Naive thymus-derived CD4-positive, alpha-beta T cell (primary cell): ENCODE measurements at regions of chr1 and their contacts with region 1.

Region 1: GRCh38 chr1:16366722-16367257 is at the start of gene SZRD1:
- DNase-seq: peak; percentile 81 to 98 (median 96)
- ATAC-seq: peak; percentile 94
- H3K4me3 ChIP-seq: peak within 1 kb of the TSS; percentile 98
- H3K4me3 Mint-ChIP-seq: peak within 1 kb of the TSS; percentile 93 to 99 (median 96)
- H3K27ac ChIP-seq: peak within 1 kb of the TSS; percentile 99
- H3K27ac Mint-ChIP-seq: peak within 1 kb of the TSS; percentile 90 to 99 (median 97)
- H3K4me1 ChIP-seq: peaks cover 19 to 26% of the 10 kb centered on the region in 2 donors
- H3K4me1 Mint-ChIP-seq: peaks cover 15 to 43% (median 38%) of the 10 kb centered on the region in 7 donors
- H3K27me3 ChIP-seq: no peaks in the 10 kb centered on the region
- H3K27me3 Mint-ChIP-seq: no peaks in the 10 kb centered on the region
- total RNA-seq, gene SZRD1: 81.6 to 163 (median 125) TPM

Region 2: DNA sequence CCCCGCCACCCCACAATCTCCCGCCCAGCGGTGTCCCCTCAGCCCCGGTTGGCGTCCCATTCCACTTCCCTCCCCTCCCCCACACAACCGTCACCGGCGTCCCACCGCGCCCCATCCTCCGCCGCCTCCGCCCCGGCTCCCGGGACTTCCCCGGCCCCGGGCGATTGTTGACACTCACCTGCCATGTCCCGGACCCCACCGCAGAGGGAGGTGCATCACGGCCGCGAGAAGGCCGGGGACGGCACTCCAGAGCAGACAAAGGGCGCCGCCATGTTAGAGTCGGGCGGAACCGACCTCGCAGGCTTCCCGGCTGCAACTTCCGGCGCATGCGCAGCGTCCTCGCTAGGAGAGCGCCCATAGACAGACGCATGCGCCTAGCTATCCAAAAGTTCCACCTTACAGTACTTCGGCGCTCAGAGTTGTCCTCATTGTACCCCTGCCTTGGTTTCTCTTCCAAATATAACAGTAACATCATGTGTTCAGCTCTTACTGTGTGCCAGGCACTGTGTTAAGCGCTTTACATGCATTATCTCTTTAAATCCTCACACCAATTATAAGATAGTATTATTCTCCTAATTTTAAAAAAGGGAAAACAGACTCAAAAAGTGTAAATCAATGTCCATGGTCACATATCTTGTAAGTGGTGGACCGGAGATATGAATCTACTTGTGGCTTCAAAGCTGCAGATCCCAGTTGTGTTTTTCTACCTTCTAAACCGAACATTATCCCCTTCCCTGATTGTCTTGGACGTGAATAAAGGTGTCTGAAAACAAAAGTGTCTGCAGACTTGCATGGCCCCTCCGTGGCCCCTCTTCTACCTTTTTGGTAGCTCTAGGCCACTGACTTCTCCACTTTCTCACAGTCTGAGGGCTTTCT is 390.7 kb before region 1 on chr1 and contains the start of gene ZBTB17:
- CTCF ChIA-PET with region 1: no interaction called
- POLR2A ChIA-PET with region 1: interaction called, 3 read pairs
- intact Hi-C with region 1: loop called in 1 of 2 experiments (anchors 1 kb)
- DNase-seq: peak; percentile 90 to 95 (median 94)
- ATAC-seq: peak; percentile 96
- H3K4me3 ChIP-seq: peak within 1 kb of the TSS; percentile 76
- H3K4me3 Mint-ChIP-seq: peak within 1 kb of the TSS; percentile 82 to 94 (median 90)
- H3K27ac ChIP-seq: peak within 1 kb of the TSS; percentile 83
- H3K27ac Mint-ChIP-seq: peak within 1 kb of the TSS; percentile 82 to 95 (median 92)
- H3K4me1 ChIP-seq: peaks cover 12 to 17% of the 10 kb centered on the region in 2 donors
- H3K4me1 Mint-ChIP-seq: peaks cover 21 to 46% (median 38%) of the 10 kb centered on the region in 7 donors
- H3K27me3 ChIP-seq: no peaks in the 10 kb centered on the region
- H3K27me3 Mint-ChIP-seq: no peaks in the 10 kb centered on the region
- total RNA-seq, gene ZBTB17: 47.3 to 85.1 (median 65.0) TPM

Region 3: GRCh38 chr1:16206547-16207317 is 160.1 kb before region 1 on chr1:
- CTCF ChIA-PET with region 1: no interaction called
- POLR2A ChIA-PET with region 1: interaction called, 3 read pairs
- intact Hi-C with region 1: loop called (anchors 1 kb)
- DNase-seq: peak; percentile 85 to 95 (median 93)
- ATAC-seq: peak; percentile 94
- H3K4me3 ChIP-seq: peak overlapping the region; percentile 74
- H3K4me3 Mint-ChIP-seq: peak overlapping the region; percentile 83 to 95 (median 90)
- H3K27ac ChIP-seq: peak overlapping the region; percentile 81
- H3K27ac Mint-ChIP-seq: peak overlapping the region; percentile 87 to 98 (median 95)
- H3K4me1 ChIP-seq: peaks cover 9 to 15% of the 10 kb centered on the region in 2 donors
- H3K4me1 Mint-ChIP-seq: peaks cover 7 to 17% (median 13%) of the 10 kb centered on the region in 7 donors
- H3K27me3 ChIP-seq: no peaks in the 10 kb centered on the region
- H3K27me3 Mint-ChIP-seq: no peaks in the 10 kb centered on the region

Region 4: DNA sequence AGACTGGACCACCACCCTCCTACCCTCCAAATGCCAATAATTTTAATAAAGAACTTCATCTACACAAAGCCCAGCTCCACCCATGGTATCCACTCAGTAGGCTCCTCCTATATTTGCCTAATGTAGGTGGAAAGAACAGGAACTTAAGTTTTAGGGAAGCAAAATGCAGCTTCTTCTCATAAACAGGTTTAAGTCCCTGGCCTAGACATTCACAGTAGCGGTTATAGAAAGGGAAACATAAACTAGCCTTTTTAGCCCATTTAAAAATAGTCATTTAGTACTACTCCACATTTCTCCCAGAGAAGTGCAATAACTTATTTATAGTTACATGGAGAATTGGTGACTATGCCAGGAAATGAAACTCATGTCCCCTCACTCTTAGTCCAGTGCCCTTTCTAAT is 73.3 kb before region 1 on chr1:
- CTCF ChIA-PET with region 1: interaction called, 3 read pairs
- POLR2A ChIA-PET with region 1: interaction called, 5 read pairs
- intact Hi-C with region 1: loop called in 1 of 2 experiments (anchors 5 kb)
- DNase-seq: no peak
- ATAC-seq: peak; percentile 69
- H3K4me3 ChIP-seq: no peak overlapping the region
- H3K4me3 Mint-ChIP-seq: no peak overlapping the region
- H3K27ac ChIP-seq: no peak overlapping the region
- H3K27ac Mint-ChIP-seq: no peak overlapping the region
- H3K4me1 ChIP-seq: no peaks in the 10 kb centered on the region
- H3K4me1 Mint-ChIP-seq: peaks cover 2 to 24% (median 7%) of the 10 kb centered on the region in 7 donors
- H3K27me3 ChIP-seq: no peaks in the 10 kb centered on the region
- H3K27me3 Mint-ChIP-seq: no peaks in the 10 kb centered on the region

Region 5: GRCh38 chr1:16324456-16324890 is 42.3 kb before region 1 on chr1:
- CTCF ChIA-PET with region 1: no interaction called
- POLR2A ChIA-PET with region 1: no interaction called
- intact Hi-C with region 1: no loop called
- DNase-seq: no peak
- ATAC-seq: no peak
- H3K4me3 ChIP-seq: no peak overlapping the region
- H3K4me3 Mint-ChIP-seq: peak overlapping the region in 1 of 10 donors; percentile 17
- H3K27ac ChIP-seq: no peak overlapping the region
- H3K27ac Mint-ChIP-seq: peak overlapping the region in 2 of 9 donors; percentile 28 to 68
- H3K4me1 ChIP-seq: no peaks in the 10 kb centered on the region
- H3K4me1 Mint-ChIP-seq: peaks cover 7 to 36% (median 28%) of the 10 kb centered on the region in 7 donors
- H3K27me3 ChIP-seq: no peaks in the 10 kb centered on the region
- H3K27me3 Mint-ChIP-seq: no peaks in the 10 kb centered on the region

Region 6: GRCh38 chr1:16440470-16441281 is 73.9 kb after region 1 on chr1 and contains the start of gene NECAP2:
- CTCF ChIA-PET with region 1: interaction called, 8 read pairs
- POLR2A ChIA-PET with region 1: interaction called, 15 read pairs
- intact Hi-C with region 1: loop called (anchors 1 kb)
- DNase-seq: peak; percentile 79 to 95 (median 88)
- ATAC-seq: peak; percentile 95
- H3K4me3 ChIP-seq: peak within 1 kb of the TSS; percentile 94
- H3K4me3 Mint-ChIP-seq: peak within 1 kb of the TSS; percentile 93 to 100 (median 97)
- H3K27ac ChIP-seq: peak within 1 kb of the TSS; percentile 100
- H3K27ac Mint-ChIP-seq: peak within 1 kb of the TSS; percentile 88 to 98 (median 96)
- H3K4me1 ChIP-seq: peaks cover 17 to 33% of the 10 kb centered on the region in 2 donors
- H3K4me1 Mint-ChIP-seq: peaks cover 19 to 45% (median 34%) of the 10 kb centered on the region in 7 donors
- H3K27me3 ChIP-seq: no peaks in the 10 kb centered on the region
- H3K27me3 Mint-ChIP-seq: no peaks in the 10 kb centered on the region
- total RNA-seq, gene NECAP2: 98.2 to 161 (median 148) TPM

Region 7: DNA sequence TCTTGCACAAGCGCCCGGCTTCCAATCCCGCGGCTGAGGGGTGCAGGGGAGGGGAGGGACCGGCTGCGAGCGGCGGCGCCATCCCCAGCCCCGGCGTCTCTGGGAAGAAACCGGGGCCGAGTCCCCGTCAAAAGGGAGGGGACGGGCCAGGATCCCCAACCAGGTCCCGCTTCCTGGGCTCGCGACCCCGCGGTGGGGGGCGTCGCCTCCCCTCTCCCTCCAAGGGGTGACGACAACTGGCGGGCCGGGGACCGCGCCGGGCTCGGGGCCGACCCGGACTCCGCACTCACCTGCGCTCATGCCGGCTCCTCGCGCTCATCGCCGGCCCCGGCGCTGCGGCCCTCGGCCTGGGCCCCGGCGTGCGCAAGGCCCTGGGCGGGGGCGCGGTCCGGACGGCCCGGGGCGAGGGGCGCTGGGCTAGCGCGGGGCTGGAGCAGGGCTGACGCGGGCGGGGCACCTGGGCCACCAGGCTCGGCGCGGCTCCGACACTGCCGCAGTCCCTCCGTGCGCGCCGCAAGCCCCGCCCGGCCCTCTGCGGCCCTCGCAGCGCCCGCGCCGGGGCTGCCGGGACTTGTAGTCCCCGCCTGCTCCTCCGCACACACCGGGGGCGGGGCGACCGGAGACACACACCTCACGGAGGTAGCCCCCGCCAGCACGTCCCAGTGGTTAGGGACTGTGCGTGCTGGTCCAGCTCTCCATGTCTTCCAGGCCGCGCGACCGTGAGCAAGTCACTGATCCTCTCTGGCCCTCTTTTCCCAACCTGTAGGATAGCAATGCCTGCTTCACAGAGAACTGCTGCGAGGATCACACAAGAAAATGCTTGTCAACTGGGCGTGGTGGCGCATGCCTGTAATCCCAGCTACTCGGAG is 644.9 kb after region 1 on chr1 and contains the start of gene ATP13A2:
- CTCF ChIA-PET with region 1: no interaction called
- POLR2A ChIA-PET with region 1: no interaction called
- intact Hi-C with region 1: loop called in 1 of 2 experiments (anchors 10 kb)
- DNase-seq: peak; percentile 76 to 87 (median 82)
- ATAC-seq: peak; percentile 99
- H3K4me3 ChIP-seq: peak within 1 kb of the TSS; percentile 72
- H3K4me3 Mint-ChIP-seq: peak within 1 kb of the TSS; percentile 81 to 91 (median 86)
- H3K27ac ChIP-seq: peak within 1 kb of the TSS; percentile 72
- H3K27ac Mint-ChIP-seq: peak within 1 kb of the TSS; percentile 23 to 83 (median 75)
- H3K4me1 ChIP-seq: peaks cover 15 to 16% of the 10 kb centered on the region in 2 donors
- H3K4me1 Mint-ChIP-seq: peaks cover 9 to 27% (median 17%) of the 10 kb centered on the region in 7 donors
- H3K27me3 ChIP-seq: no peaks in the 10 kb centered on the region
- H3K27me3 Mint-ChIP-seq: peaks cover 0 to 2% (median 0%) of the 10 kb centered on the region in 5 donors
- total RNA-seq, gene ATP13A2: 32.9 to 57.4 (median 42.1) TPM